ENCODE measurements at regions of chr2 and their contacts with region 1.

Region 1: GRCh38 chr2:123015186-123015585 is 1009.9 kb upstream of the CNTNAP5 start:
- DNase-seq: no peak
- H3K4me3 Mint-ChIP-seq: no peak overlapping the region
- H3K27ac Mint-ChIP-seq: no peak overlapping the region
- H3K4me1 Mint-ChIP-seq: no peaks in the 10 kb centered on the region
- H3K27me3 Mint-ChIP-seq: no peaks in the 10 kb centered on the region

Region 2: DNA sequence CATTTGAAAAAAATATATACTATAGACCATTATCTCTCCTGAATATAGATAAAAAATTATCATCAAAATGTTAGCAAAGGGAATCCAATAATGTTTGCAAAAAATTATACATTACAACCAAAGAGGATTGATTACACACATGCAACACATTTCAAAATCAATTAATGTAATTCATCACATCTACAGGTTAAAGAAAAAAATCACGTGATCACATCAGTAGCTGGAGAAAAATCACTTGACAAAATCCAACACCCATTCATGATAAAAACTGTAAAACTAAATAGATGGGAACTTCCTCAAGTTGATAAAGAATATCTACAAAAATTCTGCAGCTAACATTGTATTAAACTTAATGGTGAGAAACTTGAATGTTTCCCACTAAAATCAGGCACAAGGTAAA is 37.6 kb before region 1 on chr2:
- intact Hi-C with region 1: no loop called
- DNase-seq: no peak
- H3K4me3 Mint-ChIP-seq: no peak overlapping the region
- H3K27ac Mint-ChIP-seq: no peak overlapping the region
- H3K4me1 Mint-ChIP-seq: no peaks in the 10 kb centered on the region
- H3K27me3 Mint-ChIP-seq: no peaks in the 10 kb centered on the region

Region 3: DNA sequence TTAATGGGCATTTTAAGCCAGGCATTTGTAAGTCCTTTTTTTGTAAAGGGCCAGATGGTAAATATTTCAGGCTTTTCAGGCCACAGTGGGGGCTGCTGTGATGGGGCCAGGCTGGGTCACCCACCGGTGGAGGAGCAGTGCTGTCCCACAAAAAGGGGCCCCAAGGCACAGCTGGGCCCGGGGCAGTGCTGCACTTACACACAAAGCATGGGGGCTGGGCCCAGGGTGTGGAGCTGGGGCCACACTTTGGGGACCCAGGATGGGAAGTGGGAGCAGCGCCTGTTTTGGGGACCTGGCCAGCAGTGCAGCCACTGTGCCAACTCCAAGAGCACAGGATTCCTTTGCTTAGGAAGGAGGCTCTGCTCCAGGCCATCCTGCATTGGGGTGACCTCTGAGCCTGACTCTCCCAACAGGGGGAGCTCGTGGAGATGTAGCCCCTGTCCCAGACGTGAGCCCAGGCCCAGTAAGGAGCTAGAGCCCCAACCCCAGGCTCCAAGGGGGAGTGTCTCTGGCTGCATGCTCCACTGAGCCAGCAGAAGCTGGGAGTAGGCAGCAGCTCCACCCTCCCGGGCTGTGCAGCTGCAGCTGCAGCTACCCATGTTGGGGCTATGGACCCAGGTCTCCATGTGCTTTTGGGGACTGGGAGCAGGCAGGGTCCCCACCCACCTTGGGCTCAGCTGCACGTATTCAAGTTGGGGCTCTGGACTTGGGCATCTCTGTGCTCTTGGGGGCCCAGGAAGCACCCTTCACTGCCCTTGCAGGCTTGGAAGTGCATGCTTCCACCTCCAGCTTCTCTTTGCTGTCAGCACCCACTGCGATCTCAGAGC is 26.6 kb before region 1 on chr2:
- intact Hi-C with region 1: loop called (anchors 2 kb)
- DNase-seq: no peak
- H3K4me3 Mint-ChIP-seq: no peak overlapping the region
- H3K27ac Mint-ChIP-seq: no peak overlapping the region
- H3K4me1 Mint-ChIP-seq: no peaks in the 10 kb centered on the region
- H3K27me3 Mint-ChIP-seq: no peaks in the 10 kb centered on the region